Psoas muscle (tissue), 8 donors: ENCODE measurements at regions of chr1 and their contacts with region 1.

Region 1: GRCh38 chr1:7752512-7753417 is 18.3 kb upstream of the VAMP3 start:
- DNase-seq: peak in 1 of 2 donors; percentile 36
- ATAC-seq: peak in 3 of 4 donors; percentile 47 to 82 (median 62)
- H3K4me3 ChIP-seq: peak overlapping the region; percentile 51
- H3K27ac ChIP-seq: no peak overlapping the region
- H3K4me1 ChIP-seq: no peaks in the 10 kb centered on the region
- H3K27me3 ChIP-seq: no peaks in the 10 kb centered on the region
- CTCF ChIP-seq: peak; percentile 85

Region 2: GRCh38 chr1:7667625-7668218 is 85.0 kb before region 1 on chr1:
- intact Hi-C with region 1: loop called (anchors 1 to 2 kb)
- DNase-seq: peak; percentile 91 to 93
- ATAC-seq: peak; percentile 85 to 95 (median 91)
- H3K4me3 ChIP-seq: no peak overlapping the region
- H3K27ac ChIP-seq: no peak overlapping the region
- H3K4me1 ChIP-seq: no peaks in the 10 kb centered on the region
- H3K27me3 ChIP-seq: no peaks in the 10 kb centered on the region
- CTCF ChIP-seq: peak; percentile 100